Activated CD4-positive, alpha-beta memory T cell treated with anti-CD3 and anti-CD28 coated beads, Interleukin-2, amount 10 ng/mL, durations not matched to agents 7 days and 5 days (primary cell): ENCODE measurements at regions of chr1 and their contacts with region 1.

Region 1: GRCh38 chr1:115609021-115609420 is 32.7 kb upstream of the VANGL1 start:
- DNase-seq: no peak
- H3K4me3 Mint-ChIP-seq: no peak overlapping the region
- H3K27ac Mint-ChIP-seq: no peak overlapping the region
- H3K4me1 Mint-ChIP-seq: no peaks in the 10 kb centered on the region
- H3K27me3 Mint-ChIP-seq: peaks cover 21% of the 10 kb centered on the region

Region 2: DNA sequence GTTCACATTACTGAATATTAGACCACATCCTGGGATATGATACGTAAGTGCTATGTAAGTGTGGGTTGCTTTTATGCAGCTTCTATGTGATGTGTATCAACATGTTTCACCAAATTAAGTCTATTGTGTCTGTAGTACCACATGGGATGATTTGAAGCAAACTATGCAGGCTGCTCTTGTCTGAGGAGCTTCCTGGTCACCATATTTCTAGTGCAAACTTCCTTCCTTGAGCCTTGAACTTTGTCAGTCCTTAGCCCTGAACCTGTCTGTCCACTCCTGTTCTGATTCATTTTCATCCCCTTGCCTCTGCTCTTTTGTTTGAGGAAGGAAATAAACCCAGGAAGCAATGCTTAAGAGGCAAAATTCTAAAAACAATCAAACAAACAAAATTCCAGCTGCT is 84.8 kb before region 1 on chr1:
- CTCF ChIA-PET with region 1: no interaction called
- POLR2A ChIA-PET with region 1: no interaction called
- DNase-seq: no peak
- H3K4me3 Mint-ChIP-seq: no peak overlapping the region
- H3K27ac Mint-ChIP-seq: no peak overlapping the region
- H3K4me1 Mint-ChIP-seq: no peaks in the 10 kb centered on the region
- H3K27me3 Mint-ChIP-seq: peaks cover 3% of the 10 kb centered on the region

Region 3: DNA sequence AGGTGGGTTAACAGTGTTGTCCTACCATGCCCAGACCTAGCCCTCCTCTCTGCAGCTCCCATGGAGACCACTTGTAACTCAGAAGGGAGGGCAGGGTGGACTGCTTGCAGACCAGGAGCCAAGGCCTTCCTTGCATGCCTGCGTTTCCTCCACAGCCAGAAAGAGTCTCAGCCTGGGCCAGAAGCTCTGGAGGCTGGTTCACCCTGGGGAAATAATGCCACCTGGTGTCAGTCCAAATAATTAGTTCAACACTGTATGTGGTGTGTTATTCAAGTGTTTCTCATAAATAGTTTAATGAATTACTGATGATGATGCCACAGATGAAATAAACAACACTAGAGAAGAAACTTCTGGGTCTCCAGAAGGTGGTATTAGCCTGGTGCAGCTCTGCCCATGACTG is 15.8 kb after region 1 on chr1:
- CTCF ChIA-PET with region 1: no interaction called
- POLR2A ChIA-PET with region 1: no interaction called
- DNase-seq: no peak
- H3K4me3 Mint-ChIP-seq: no peak overlapping the region
- H3K27ac Mint-ChIP-seq: no peak overlapping the region
- H3K4me1 Mint-ChIP-seq: no peaks in the 10 kb centered on the region
- H3K27me3 Mint-ChIP-seq: peaks cover 31% of the 10 kb centered on the region

Region 4: GRCh38 chr1:115642168-115643072 is 33.4 kb after region 1 on chr1:
- CTCF ChIA-PET with region 1: no interaction called
- POLR2A ChIA-PET with region 1: no interaction called
- DNase-seq: peak; percentile 64
- H3K4me3 Mint-ChIP-seq: peak overlapping the region; percentile 86
- H3K27ac Mint-ChIP-seq: peak overlapping the region; percentile 78
- H3K4me1 Mint-ChIP-seq: peaks cover 26% of the 10 kb centered on the region
- H3K27me3 Mint-ChIP-seq: peaks cover 25% of the 10 kb centered on the region

Region 5: GRCh38 chr1:115706587-115707425 is 97.8 kb after region 1 on chr1:
- CTCF ChIA-PET with region 1: interaction called, 38 read pairs
- POLR2A ChIA-PET with region 1: interaction called, 4 read pairs
- DNase-seq: no peak
- H3K4me3 Mint-ChIP-seq: no peak overlapping the region
- H3K27ac Mint-ChIP-seq: no peak overlapping the region
- H3K4me1 Mint-ChIP-seq: no peaks in the 10 kb centered on the region
- H3K27me3 Mint-ChIP-seq: peaks cover 20% of the 10 kb centered on the region

Region 6: DNA sequence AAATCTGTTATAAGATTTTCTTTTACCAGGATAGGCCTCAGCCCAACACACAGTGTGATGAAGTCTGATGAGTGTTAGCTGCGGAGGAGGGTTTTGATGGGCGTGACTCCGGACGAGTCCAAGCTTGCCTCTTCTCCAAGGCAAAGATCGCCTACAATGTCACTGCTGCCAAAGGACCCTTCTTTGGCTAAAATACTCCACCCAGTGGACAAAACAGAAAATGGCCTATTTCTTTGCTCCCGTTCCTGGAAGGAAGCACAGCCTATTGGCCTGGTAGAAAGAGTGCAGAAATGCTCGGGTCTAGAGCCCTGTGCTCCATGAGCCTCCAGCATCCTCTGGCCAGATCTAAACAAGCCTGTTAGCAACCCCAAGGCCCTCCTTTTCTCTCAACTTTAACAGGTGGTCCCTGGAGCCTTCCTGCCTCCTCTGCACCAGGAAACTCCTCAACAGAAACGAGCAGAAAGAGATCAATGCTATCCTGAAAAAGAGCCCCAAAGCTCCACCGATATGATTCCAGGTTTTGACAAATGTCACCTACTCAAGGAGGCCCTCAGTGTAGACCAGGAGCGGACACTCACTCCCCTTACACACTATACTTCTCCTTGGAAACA is 162.9 kb after region 1 on chr1:
- CTCF ChIA-PET with region 1: interaction called, 15 read pairs
- POLR2A ChIA-PET with region 1: no interaction called
- DNase-seq: no peak
- H3K4me3 Mint-ChIP-seq: no peak overlapping the region
- H3K27ac Mint-ChIP-seq: no peak overlapping the region
- H3K4me1 Mint-ChIP-seq: no peaks in the 10 kb centered on the region
- H3K27me3 Mint-ChIP-seq: peaks cover 16% of the 10 kb centered on the region